Posterior vena cava (tissue), 2 donors: ENCODE measurements at regions of chr12 and their contacts with region 1.

Region 1: GRCh38 chr12:15532364-15532977 is 210.2 kb downstream of the PTPRO start:
- DNase-seq: no peak

Region 2: GRCh38 chr12:15050659-15051058 is 481.8 kb before region 1 on chr12:
- intact Hi-C with region 1: no loop called
- DNase-seq: no peak

Region 3: DNA sequence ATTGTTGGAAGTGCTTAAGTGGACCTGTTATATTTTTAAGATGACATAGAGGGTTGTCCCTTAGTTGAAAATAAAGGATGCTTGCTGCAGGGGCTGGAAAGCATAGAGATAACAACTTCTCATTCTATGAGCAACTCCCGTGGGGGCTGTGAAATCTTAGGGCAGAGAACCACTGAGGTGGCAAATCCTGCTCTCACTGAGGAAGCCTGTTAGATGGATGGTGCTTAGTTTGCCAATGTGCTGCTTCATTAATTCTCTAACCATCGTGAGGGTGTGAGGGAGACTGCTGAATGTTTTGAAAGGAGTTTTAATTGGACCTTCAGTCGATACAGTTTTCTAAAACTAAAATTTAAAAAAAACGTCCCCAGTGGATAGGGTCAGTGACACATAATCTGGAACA is 163.7 kb before region 1 on chr12:
- intact Hi-C with region 1: no loop called
- DNase-seq: no peak

Region 4: GRCh38 chr12:15574353-15574752 is 41.9 kb after region 1 on chr12:
- intact Hi-C with region 1: loop called in 1 of 2 experiments (anchors 5 kb)
- DNase-seq: no peak

Region 5: GRCh38 chr12:15584366-15585041 is 52.0 kb after region 1 on chr12:
- intact Hi-C with region 1: loop called (anchors 5 to 10 kb)
- DNase-seq: no peak